Sigmoid colon (tissue), 7 donors: ENCODE measurements at regions of chr11 and their contacts with region 1.

Region 1: DNA sequence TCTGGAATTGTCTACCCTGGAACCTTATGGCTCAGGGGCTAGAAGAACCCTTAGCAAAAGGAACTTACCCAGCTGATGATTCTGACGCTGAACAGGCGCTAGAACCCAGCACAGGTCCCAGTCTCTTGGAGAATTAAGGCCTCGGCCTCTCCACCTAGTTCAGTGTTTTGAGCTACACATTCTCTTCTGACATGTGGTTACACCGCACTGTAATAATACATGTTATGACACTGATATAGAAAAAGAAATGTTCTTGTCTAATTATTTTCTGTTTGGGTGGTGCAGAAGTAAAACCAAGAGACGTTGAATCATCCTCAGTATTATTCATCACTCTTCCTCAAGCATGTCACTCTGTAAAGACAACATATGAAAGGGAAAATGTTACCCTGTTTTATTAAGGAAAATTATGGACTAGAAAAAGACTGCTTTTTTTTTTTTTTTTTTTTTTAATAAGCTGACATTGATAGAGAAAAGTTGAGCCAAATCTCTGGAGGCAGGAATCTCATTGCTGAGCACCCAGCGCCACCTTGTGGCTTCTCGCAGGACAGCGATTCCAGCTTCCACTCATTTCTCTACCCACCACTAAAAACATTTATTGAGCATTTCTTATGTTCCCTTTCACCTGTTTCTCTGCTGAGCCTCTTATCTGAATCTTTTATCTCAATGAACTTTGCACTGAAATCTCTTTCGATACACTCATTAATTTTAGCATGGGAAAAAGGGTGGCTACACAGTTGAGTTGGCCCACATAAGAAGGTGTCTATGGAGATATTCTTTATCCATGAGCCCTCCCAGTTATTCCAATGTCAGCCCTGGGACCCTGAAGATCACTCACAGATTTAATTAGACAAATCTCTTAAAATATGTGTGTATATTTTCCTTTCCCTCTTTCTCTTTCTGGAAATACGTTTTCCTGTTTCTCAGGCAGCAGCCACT is 12.6 kb upstream of the APLNR start:
- DNase-seq: peak; percentile 72
- H3K4me3 ChIP-seq: no peak overlapping the region
- H3K27ac ChIP-seq: peak overlapping the region in 2 of 4 donors; percentile 12 to 35
- H3K4me1 ChIP-seq: peaks cover 0 to 8% (median 4%) of the 10 kb centered on the region in 4 donors
- H3K27me3 ChIP-seq: no peaks in the 10 kb centered on the region
- CTCF ChIP-seq: peak; percentile 47 to 79 (median 74)
- EP300 ChIP-seq: no peak
- POLR2A ChIP-seq: no peak

Region 2: GRCh38 chr11:57116654-57117053 is 133.0 kb before region 1 on chr11:
- intact Hi-C with region 1: loop called (anchors 2 kb)
- DNase-seq: no peak
- H3K4me3 ChIP-seq: no peak overlapping the region
- H3K27ac ChIP-seq: no peak overlapping the region
- H3K4me1 ChIP-seq: no peaks in the 10 kb centered on the region
- H3K27me3 ChIP-seq: no peaks in the 10 kb centered on the region
- CTCF ChIP-seq: peak in 3 of 4 experiments; percentile 9 to 51 (median 33)
- EP300 ChIP-seq: no peak
- POLR2A ChIP-seq: no peak

Region 3: DNA sequence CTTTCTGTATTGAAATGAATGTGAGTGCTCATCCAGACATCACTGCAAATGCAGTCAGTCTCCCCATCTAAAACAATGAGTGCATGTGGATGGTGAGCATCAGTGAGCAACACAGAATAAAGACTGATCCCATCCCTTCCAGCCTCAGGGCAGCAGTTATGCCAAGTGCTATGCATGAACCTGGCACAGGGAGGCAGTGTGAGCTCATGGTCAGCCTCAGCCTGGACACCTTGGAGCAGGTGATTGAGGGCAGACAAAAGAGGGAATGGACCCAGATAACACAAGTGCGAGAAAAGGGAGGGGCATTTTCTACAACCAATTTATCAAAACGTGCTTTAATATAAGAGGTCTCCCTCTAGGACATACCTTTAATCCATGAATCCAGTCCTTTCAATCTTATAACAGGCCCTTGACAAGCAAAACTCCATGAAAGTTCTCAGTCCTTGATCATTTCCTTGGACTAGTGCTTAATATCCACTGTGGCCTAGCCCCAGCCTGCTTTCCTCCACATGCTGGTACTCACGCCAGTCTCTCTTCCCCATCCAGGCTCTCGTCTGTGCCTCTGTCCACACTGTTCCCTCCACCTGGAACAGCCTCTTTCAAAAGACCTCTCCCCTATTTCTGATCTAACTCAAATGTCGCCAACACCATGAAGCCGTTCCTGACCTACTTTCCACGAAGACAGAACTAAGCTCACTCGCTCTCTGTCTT is 118.4 kb before region 1 on chr11:
- intact Hi-C with region 1: loop called (anchors 2 kb)
- DNase-seq: no peak
- H3K4me3 ChIP-seq: no peak overlapping the region
- H3K27ac ChIP-seq: no peak overlapping the region
- H3K4me1 ChIP-seq: no peaks in the 10 kb centered on the region
- H3K27me3 ChIP-seq: no peaks in the 10 kb centered on the region
- CTCF ChIP-seq: peak; percentile 16 to 68 (median 46)
- EP300 ChIP-seq: no peak
- POLR2A ChIP-seq: no peak